B cell (primary cell): ENCODE measurements at regions of chr2 and their contacts with region 1.

Region 1: DNA sequence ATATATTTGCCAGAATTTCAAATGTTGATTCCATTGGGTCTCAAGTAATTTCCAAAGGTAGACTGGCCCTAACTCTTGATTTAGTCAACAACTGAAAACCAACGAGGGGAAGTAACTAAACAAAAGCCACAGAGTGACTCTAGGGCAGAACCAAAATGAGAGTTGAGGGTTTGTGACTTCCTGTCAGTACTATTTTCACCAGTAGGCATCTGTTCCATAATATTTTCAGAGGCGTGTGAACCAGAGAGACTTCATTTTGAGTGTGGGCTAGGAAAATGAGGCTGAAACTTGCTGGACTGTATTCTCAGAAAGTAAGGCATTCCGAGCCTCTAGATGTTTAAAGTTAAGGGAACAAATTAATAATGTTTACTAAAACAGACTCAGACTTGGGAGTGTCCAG is 70.6 kb downstream of the GDF7 start:
- DNase-seq: peak; percentile 16
- ATAC-seq: no peak
- H3K4me3 ChIP-seq: peak overlapping the region in 1 of 5 experiments; percentile 24
- H3K4me3 Mint-ChIP-seq: peak overlapping the region; percentile 42
- H3K27ac ChIP-seq: no peak overlapping the region
- H3K27ac Mint-ChIP-seq: no peak overlapping the region
- H3K4me1 ChIP-seq: peaks cover 10 to 26% of the 10 kb centered on the region in 2 donors
- H3K4me1 Mint-ChIP-seq: peaks cover 24% of the 10 kb centered on the region
- H3K27me3 ChIP-seq: no peaks in the 10 kb centered on the region
- H3K27me3 Mint-ChIP-seq: no peaks in the 10 kb centered on the region
- CTCF ChIP-seq: no peak

Region 2: DNA sequence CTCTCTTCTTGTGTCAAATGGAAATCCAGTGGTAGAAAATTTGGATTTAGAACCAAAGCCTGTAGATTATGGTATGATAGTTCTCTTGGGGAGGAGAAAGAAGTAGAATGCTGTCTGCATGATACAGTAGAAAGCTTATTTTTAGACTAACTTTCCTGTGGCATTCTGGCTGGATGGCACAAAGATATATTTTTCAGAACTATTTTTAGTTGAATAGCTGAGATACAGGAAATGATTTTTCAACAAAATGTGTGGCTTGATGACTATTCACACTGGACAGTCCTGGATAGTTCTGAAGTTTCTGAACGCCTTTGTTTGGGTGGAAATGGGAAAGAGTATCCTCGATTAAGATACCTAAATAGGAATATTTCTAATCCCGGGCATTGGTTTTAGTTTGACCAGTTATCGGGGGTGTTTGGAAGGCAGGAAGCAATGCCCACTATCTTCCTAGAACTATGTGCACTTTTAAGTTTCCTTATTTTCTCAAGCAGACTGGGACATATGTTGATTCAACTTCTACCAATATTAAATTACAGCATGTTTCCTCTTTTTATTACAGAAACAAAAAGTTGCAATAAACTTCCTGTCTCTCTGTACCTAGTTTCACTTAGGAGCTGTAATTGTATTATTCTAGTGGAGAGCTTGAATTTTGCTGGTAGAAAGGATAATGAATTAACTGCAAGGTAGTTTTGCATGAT is 38.4 kb before region 1 on chr2:
- CTCF ChIA-PET with region 1: no interaction called
- POLR2A ChIA-PET with region 1: no interaction called
- intact Hi-C with region 1: loop called (anchors 5 kb)
- DNase-seq: peak; percentile 30
- ATAC-seq: no peak
- H3K4me3 ChIP-seq: peak overlapping the region in 1 of 5 experiments; percentile 12
- H3K4me3 Mint-ChIP-seq: peak overlapping the region; percentile 66
- H3K27ac ChIP-seq: peak overlapping the region in 1 of 2 donors; percentile 1
- H3K27ac Mint-ChIP-seq: peak overlapping the region; percentile 27
- H3K4me1 ChIP-seq: peaks cover 13 to 31% of the 10 kb centered on the region in 2 donors
- H3K4me1 Mint-ChIP-seq: peaks cover 32% of the 10 kb centered on the region
- H3K27me3 ChIP-seq: no peaks in the 10 kb centered on the region
- H3K27me3 Mint-ChIP-seq: no peaks in the 10 kb centered on the region
- CTCF ChIP-seq: no peak